BJ (cell line): ENCODE measurements at regions of chr10 and their contacts with region 1.

Region 1: DNA sequence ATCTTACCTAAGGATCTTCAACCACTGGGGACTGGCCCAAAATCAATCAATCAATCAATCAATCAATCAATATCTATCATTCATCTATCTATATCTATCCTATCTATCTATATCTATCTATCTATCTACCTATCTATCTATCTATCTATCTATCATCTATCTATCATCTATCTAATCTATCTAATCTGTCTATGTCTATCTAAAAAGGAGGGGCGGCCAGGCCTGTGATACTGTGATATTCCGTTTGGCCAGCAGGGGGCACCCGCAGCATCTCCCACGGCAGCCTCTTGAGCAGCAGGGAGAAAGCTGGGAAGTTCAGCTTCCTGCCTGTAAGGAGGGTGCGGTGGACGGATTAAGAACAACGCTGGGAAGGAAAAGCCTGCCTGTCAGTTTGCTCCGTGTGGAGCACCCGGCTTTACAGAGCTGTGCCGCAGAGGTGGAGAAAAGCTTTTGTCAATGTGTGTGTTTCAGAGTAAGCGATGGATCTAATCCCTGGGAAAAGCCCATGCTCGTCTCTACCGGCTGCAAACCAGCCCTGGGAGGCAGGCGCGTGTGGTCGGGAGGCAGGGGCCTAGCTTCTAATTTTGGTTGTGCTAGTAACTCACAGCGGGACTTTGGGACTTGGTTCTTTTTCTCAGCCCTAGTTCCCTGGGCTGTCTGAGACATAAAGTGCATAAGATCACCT is 125.0 kb downstream of the SH2D4B start:
- DNase-seq: peak; percentile 19
- H3K4me3 ChIP-seq: no peak overlapping the region
- H3K27me3 ChIP-seq: no peaks in the 10 kb centered on the region
- CTCF ChIP-seq: peak; percentile 90

Region 2: GRCh38 chr10:80371460-80371859 is 291.3 kb before region 1 on chr10:
- CTCF ChIA-PET with region 1: no interaction called
- POLR2A ChIA-PET with region 1: no interaction called
- DNase-seq: no peak
- H3K4me3 ChIP-seq: no peak overlapping the region
- H3K27me3 ChIP-seq: no peaks in the 10 kb centered on the region
- CTCF ChIP-seq: no peak

Region 3: GRCh38 chr10:80588546-80588945 is 74.2 kb before region 1 on chr10:
- CTCF ChIA-PET with region 1: no interaction called
- POLR2A ChIA-PET with region 1: no interaction called
- DNase-seq: no peak
- H3K4me3 ChIP-seq: no peak overlapping the region
- H3K27me3 ChIP-seq: no peaks in the 10 kb centered on the region
- CTCF ChIP-seq: no peak

Region 4: GRCh38 chr10:80632742-80633141 is 30.0 kb before region 1 on chr10:
- CTCF ChIA-PET with region 1: interaction called, 12 read pairs
- POLR2A ChIA-PET with region 1: no interaction called
- DNase-seq: no peak
- H3K4me3 ChIP-seq: no peak overlapping the region
- H3K27me3 ChIP-seq: no peaks in the 10 kb centered on the region
- CTCF ChIP-seq: no peak

Region 5: DNA sequence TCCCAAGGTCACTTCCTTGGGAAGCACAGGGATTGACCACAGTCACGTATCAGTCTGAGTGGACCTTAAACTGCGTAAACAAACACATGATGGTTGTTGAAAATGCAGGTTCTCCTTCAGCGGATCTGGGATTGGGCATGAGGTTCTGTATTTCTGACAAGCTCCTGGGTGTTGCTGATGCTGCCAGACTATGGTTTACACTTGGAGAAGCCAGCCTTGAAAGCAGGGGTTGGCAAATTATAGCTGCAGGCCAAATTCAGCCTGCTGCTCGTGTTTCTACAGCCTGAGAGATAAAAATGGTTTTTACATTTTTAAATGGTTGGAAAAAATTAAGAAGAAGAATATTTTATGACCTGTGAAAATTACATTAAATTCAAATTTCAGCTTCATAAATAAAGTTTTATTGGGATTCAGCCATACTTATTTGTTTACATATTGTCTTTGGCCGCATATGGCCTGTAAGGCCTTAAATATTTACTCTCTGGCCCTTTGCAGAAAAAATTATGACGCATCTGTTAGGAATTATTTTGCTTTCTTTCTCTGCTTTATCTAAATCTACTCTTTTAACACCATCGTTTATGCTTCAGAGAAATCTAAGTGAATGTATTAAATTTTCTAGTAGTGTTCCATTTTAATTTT is 15.4 kb before region 1 on chr10:
- CTCF ChIA-PET with region 1: interaction called, 39 read pairs
- POLR2A ChIA-PET with region 1: no interaction called
- DNase-seq: no peak
- H3K4me3 ChIP-seq: no peak overlapping the region
- H3K27me3 ChIP-seq: no peaks in the 10 kb centered on the region
- CTCF ChIP-seq: no peak

Region 6: GRCh38 chr10:80924063-80924952 is 261.6 kb after region 1 on chr10:
- CTCF ChIA-PET with region 1: interaction called, 24 read pairs
- POLR2A ChIA-PET with region 1: no interaction called
- DNase-seq: no peak
- H3K4me3 ChIP-seq: no peak overlapping the region
- H3K27me3 ChIP-seq: no peaks in the 10 kb centered on the region
- CTCF ChIP-seq: peak; percentile 48